ENCODE measurements at regions of chr2 and their contacts with region 1.

Region 1: GRCh38 chr2:223797811-223798721 is 39.3 kb downstream of the AP1S3 start:
- DNase-seq: no peak
- H3K4me3 ChIP-seq: no peak overlapping the region
- H3K27ac ChIP-seq: peak overlapping the region in 2 of 3 donors; percentile 3 to 48
- H3K4me1 ChIP-seq: peaks cover 18% of the 10 kb centered on the region in 2 donors
- H3K27me3 ChIP-seq: no peaks in the 10 kb centered on the region
- CTCF ChIP-seq: peak; percentile 25 to 97 (median 68)
- POLR2A ChIP-seq: no peak

Region 2: DNA sequence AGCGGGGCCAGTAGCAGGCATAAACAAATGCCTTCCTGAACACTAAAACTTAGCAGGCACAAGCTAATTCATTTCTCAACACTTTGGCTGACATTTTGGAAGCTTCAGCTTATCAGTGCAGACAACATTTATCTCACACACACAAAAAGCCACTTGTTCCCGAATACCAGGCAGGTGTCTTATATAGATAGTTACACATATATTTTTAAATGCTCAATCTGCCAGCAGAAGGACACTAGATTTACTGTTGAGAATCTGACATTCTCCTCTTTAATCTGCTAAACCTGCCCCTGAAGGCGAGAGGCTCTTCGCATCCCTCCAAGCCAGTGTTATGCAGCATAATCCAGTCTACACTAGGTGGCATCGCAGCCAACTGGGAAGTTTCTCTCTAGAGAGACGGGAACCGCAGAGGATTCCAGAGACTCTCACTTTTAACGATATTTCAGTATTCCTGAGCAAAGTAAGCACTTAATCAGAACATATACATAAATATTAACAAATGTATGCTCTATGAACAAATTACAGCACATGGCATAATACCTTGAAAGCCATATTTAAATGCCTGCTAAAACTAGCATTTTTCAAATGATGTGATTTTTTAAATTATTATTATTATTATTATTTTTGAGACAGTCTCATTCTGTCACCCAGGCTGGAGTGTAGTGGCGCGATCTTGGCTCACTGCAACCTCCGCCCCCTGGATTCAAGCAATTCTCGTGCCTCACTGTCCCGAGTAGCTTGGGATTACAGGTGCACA is 105.7 kb before region 1 on chr2:
- intact Hi-C with region 1: loop called (anchors 5 kb)
- DNase-seq: peak; percentile 55 to 64
- H3K4me3 ChIP-seq: no peak overlapping the region
- H3K27ac ChIP-seq: no peak overlapping the region
- H3K4me1 ChIP-seq: peaks cover 4 to 15% of the 10 kb centered on the region in 2 donors
- H3K27me3 ChIP-seq: no peaks in the 10 kb centered on the region
- CTCF ChIP-seq: peak in 5 of 6 experiments; percentile 18 to 68 (median 63)
- POLR2A ChIP-seq: no peak

Measured in thyroid gland (tissue), 4 donors.